ENCODE measurements at regions of chr1 and their contacts with region 1.

Region 1: GRCh38 chr1:181088079-181089016 is at the start of gene IER5:
- DNase-seq: peak; percentile 93 to 97 (median 95)
- ATAC-seq: peak; percentile 71
- H3K4me3 ChIP-seq: peak within 1 kb of the TSS; percentile 70 to 97
- H3K4me3 Mint-ChIP-seq: peak within 1 kb of the TSS; percentile 99
- H3K27ac ChIP-seq: peak within 1 kb of the TSS; percentile 89 to 99
- H3K27ac Mint-ChIP-seq: peak within 1 kb of the TSS; percentile 99
- H3K4me1 ChIP-seq: peaks cover 20% of the 10 kb centered on the region
- H3K4me1 Mint-ChIP-seq: peaks cover 44% of the 10 kb centered on the region
- H3K27me3 ChIP-seq: no peaks in the 10 kb centered on the region
- H3K27me3 Mint-ChIP-seq: no peaks in the 10 kb centered on the region
- CTCF ChIP-seq: no peak
- total RNA-seq, gene IER5: 74.7 to 76.6 TPM

Region 2: GRCh38 chr1:180515864-180516388 is 572.4 kb before region 1 on chr1:
- CTCF ChIA-PET with region 1: interaction called, 3 read pairs
- POLR2A ChIA-PET with region 1: no interaction called
- intact Hi-C with region 1: loop called in 1 of 2 experiments (anchors 5 kb)
- DNase-seq: peak; percentile 10 to 76 (median 51)
- ATAC-seq: peak; percentile 95
- H3K4me3 ChIP-seq: no peak overlapping the region
- H3K4me3 Mint-ChIP-seq: no peak overlapping the region
- H3K27ac ChIP-seq: no peak overlapping the region
- H3K27ac Mint-ChIP-seq: no peak overlapping the region
- H3K4me1 ChIP-seq: no peaks in the 10 kb centered on the region
- H3K4me1 Mint-ChIP-seq: peaks cover 2% of the 10 kb centered on the region
- H3K27me3 ChIP-seq: no peaks in the 10 kb centered on the region
- H3K27me3 Mint-ChIP-seq: peaks cover 15% of the 10 kb centered on the region
- CTCF ChIP-seq: peak; percentile 93

Region 3: GRCh38 chr1:181033799-181034451 is 54.4 kb before region 1 on chr1 and contains the start of gene MR1:
- CTCF ChIA-PET with region 1: interaction called, 8 read pairs
- POLR2A ChIA-PET with region 1: interaction called, 11 read pairs
- intact Hi-C with region 1: loop called (anchors 1 to 2 kb)
- DNase-seq: peak in 7 of 9 experiments; percentile 16 to 93 (median 48)
- ATAC-seq: peak; percentile 97
- H3K4me3 ChIP-seq: peak within 1 kb of the TSS; percentile 66 to 76
- H3K4me3 Mint-ChIP-seq: peak within 1 kb of the TSS; percentile 96
- H3K27ac ChIP-seq: peak within 1 kb of the TSS; percentile 85 to 99
- H3K27ac Mint-ChIP-seq: peak within 1 kb of the TSS; percentile 99
- H3K4me1 ChIP-seq: peaks cover 39% of the 10 kb centered on the region
- H3K4me1 Mint-ChIP-seq: peaks cover 55% of the 10 kb centered on the region
- H3K27me3 ChIP-seq: no peaks in the 10 kb centered on the region
- H3K27me3 Mint-ChIP-seq: no peaks in the 10 kb centered on the region
- CTCF ChIP-seq: no peak
- total RNA-seq, gene MR1: 15.4 to 16.0 TPM

Region 4: GRCh38 chr1:181099152-181100014 is 11.0 kb after region 1 on chr1:
- CTCF ChIA-PET with region 1: interaction called, 57 read pairs
- POLR2A ChIA-PET with region 1: interaction called, 143 read pairs
- intact Hi-C with region 1: loop called in 1 of 2 experiments (anchors 1 kb)
- DNase-seq: no peak
- ATAC-seq: peak; percentile 24
- H3K4me3 ChIP-seq: no peak overlapping the region
- H3K4me3 Mint-ChIP-seq: no peak overlapping the region
- H3K27ac ChIP-seq: no peak overlapping the region
- H3K27ac Mint-ChIP-seq: peak overlapping the region; percentile 22
- H3K4me1 ChIP-seq: peaks cover 18% of the 10 kb centered on the region
- H3K4me1 Mint-ChIP-seq: peaks cover 34% of the 10 kb centered on the region
- H3K27me3 ChIP-seq: no peaks in the 10 kb centered on the region
- H3K27me3 Mint-ChIP-seq: no peaks in the 10 kb centered on the region
- CTCF ChIP-seq: no peak

Region 5: GRCh38 chr1:181152892-181153633 is 64.7 kb after region 1 on chr1:
- CTCF ChIA-PET with region 1: interaction called, 12 read pairs
- POLR2A ChIA-PET with region 1: interaction called, 6 read pairs
- intact Hi-C with region 1: loop called in 1 of 2 experiments (anchors 1 kb)
- DNase-seq: peak in 1 of 9 experiments; percentile 22
- ATAC-seq: no peak
- H3K4me3 ChIP-seq: no peak overlapping the region
- H3K4me3 Mint-ChIP-seq: no peak overlapping the region
- H3K27ac ChIP-seq: no peak overlapping the region
- H3K27ac Mint-ChIP-seq: no peak overlapping the region
- H3K4me1 ChIP-seq: peaks cover 49% of the 10 kb centered on the region
- H3K4me1 Mint-ChIP-seq: peaks cover 48% of the 10 kb centered on the region
- H3K27me3 ChIP-seq: no peaks in the 10 kb centered on the region
- H3K27me3 Mint-ChIP-seq: no peaks in the 10 kb centered on the region
- CTCF ChIP-seq: no peak

Region 6: GRCh38 chr1:181424786-181425403 is 336.5 kb after region 1 on chr1:
- CTCF ChIA-PET with region 1: interaction called, 3 read pairs
- POLR2A ChIA-PET with region 1: no interaction called
- intact Hi-C with region 1: loop called (anchors 2 to 5 kb)
- DNase-seq: peak; percentile 59 to 88 (median 75)
- ATAC-seq: peak; percentile 73
- H3K4me3 ChIP-seq: no peak overlapping the region
- H3K4me3 Mint-ChIP-seq: peak overlapping the region; percentile 75
- H3K27ac ChIP-seq: no peak overlapping the region
- H3K27ac Mint-ChIP-seq: no peak overlapping the region
- H3K4me1 ChIP-seq: no peaks in the 10 kb centered on the region
- H3K4me1 Mint-ChIP-seq: peaks cover 4% of the 10 kb centered on the region
- H3K27me3 ChIP-seq: peaks cover 0 to 4% of the 10 kb centered on the region in 2 experiments
- H3K27me3 Mint-ChIP-seq: peaks cover 19% of the 10 kb centered on the region
- CTCF ChIP-seq: peak; percentile 99